Heart right ventricle (tissue), 16 donors: ENCODE measurements at regions of chr2 and their contacts with region 1.

Region 1: GRCh38 chr2:216235462-216235861 is 126.3 kb downstream of the XRCC5 start:
- DNase-seq: no peak
- ATAC-seq: no peak
- H3K4me3 ChIP-seq: no peak overlapping the region
- H3K27ac ChIP-seq: no peak overlapping the region
- H3K4me1 ChIP-seq: no peaks in the 10 kb centered on the region
- H3K27me3 ChIP-seq: no peaks in the 10 kb centered on the region
- CTCF ChIP-seq: no peak

Region 2: GRCh38 chr2:215644233-215644897 is 591.1 kb before region 1 on chr2:
- intact Hi-C with region 1: loop called in 1 of 10 experiments (anchors 10 kb)
- DNase-seq: no peak
- ATAC-seq: no peak
- H3K4me3 ChIP-seq: no peak overlapping the region
- H3K27ac ChIP-seq: peak overlapping the region in 1 of 10 donors; percentile 14
- H3K4me1 ChIP-seq: no peaks in the 10 kb centered on the region
- H3K27me3 ChIP-seq: no peaks in the 10 kb centered on the region
- CTCF ChIP-seq: no peak

Region 3: DNA sequence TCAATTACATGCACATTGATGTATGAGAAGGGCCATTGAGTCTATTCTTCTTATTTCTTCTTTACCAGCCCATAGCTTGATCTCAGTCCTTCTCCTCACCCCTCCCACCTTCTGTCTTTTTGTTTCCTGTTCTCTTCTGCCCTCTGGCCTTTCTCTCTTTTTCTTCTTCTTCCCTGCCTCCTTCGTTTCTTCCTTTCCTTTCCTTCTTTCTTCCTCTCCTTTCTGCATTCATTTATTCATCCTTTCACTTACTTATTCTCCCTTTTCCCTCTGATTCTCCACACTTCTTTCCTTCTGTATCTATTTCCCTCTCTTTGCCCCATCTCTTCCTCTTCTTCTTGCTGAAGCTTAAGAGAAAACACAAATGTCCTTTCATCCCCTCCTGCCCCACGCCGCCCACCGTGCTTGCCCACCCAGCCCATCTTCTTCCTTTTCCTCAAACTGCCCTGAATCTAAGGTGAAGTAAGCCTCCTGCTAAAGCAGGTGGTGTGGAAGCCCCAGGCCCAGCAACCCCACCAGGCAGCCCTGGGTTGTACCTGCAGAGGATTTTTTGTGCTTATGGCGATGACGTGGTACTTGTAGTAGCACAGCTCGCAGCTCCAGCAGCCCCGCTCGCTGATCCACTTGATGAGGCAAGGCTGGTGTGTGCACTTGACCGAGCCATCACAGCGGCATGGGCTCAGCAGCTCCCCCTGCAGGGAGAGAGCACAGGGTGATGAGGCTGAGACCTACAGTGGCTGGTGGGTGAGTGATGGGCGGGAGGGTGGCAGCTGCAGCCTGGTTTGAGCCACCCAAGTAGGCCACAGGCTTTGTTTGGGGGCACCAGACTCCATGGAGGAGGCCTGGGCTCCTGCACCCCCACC is 47.8 kb after region 1 on chr2:
- intact Hi-C with region 1: no loop called
- DNase-seq: no peak
- ATAC-seq: peak in 1 of 8 donors; percentile 22
- H3K4me3 ChIP-seq: no peak overlapping the region
- H3K27ac ChIP-seq: no peak overlapping the region
- H3K4me1 ChIP-seq: peaks cover 0 to 5% (median 0%) of the 10 kb centered on the region in 9 donors
- H3K27me3 ChIP-seq: peaks cover 0 to 19% (median 12%) of the 10 kb centered on the region in 7 donors
- CTCF ChIP-seq: peak in 3 of 9 donors; percentile 11 to 28 (median 24)